Mucosa of descending colon (tissue), 3 donors: ENCODE measurements at regions of chr10 and their contacts with region 1.

Region 1: DNA sequence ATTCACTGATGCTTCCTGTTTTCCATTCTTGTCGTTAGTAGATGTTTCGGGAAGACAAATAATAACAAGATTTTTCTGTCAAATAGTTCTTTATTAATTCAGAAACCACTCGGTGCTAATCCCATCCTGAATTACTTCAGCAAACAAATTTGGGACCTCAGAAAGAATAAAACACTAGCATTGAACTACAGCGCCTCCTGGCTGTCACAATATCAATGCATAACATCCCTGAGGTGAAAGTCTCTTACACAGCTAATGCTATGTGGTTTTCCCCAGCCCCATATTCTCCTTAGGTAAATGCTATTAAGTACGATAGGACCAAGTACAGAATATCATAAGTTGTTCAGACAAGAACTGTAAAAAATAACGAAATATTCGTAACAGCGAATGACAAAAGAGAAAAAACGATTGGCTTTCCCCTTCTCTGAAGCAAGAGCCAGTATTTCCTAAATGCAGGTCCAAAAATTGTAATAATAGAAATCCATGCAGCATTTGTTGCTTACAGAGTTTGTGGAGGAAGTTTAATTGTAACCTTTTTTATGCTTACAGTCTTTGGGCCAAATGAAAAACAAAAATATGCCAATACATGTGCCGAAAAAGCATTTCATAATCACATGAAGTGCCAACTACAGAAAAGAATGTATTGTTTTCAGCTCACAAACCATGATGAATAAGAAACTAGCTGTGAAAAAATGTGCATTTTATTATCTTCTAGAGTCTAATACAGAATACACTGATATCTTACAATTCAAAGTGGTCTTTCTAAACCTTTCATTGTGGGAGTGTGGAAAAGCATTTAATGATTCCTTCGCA is 47.3 kb downstream of the MYPN start:
- DNase-seq: peak in 1 of 3 donors; percentile 90
- ATAC-seq: peak; percentile 58
- H3K4me3 ChIP-seq: no peak overlapping the region
- H3K4me1 ChIP-seq: peaks cover 5% of the 10 kb centered on the region
- CTCF ChIP-seq: peak; percentile 63

Region 2: DNA sequence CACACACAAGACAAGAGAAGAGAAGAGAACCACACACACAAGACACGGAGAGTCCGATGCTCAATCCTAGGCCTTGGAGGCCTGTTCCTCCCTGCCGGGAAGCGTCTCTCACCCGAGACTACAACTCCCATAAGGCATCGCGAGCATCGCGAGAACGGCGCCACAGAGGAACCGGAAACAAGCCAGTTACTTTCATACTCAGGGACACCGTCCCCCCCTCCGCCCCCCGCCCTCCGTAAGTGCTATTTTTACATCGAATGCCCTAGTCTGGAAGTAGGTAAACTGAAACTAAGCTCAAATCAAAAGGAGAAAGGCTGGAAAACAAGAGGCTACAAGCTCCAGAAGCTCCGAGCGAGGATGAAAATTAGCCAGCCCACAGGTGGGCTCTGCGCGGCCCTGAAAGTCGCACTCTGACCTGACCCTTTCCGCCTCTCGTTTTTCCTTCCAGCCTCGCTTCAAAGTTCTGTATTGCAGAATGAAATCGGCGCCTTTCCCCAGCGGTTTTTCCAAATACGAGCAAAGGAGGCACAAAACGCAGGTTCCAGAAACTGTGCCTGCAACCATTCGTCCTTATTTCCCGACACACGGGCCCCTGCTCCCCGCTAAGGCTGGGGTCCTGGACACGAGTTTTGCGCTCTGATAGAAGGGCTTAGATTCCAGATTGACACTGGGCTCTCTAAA is 307.1 kb before region 1 on chr10:
- intact Hi-C with region 1: loop called in 1 of 2 experiments (anchors 2 kb)
- DNase-seq: peak; percentile 96 to 99 (median 98)
- ATAC-seq: peak; percentile 97
- H3K4me3 ChIP-seq: peak overlapping the region; percentile 54
- H3K4me1 ChIP-seq: peaks cover 3% of the 10 kb centered on the region
- CTCF ChIP-seq: no peak

Region 3: DNA sequence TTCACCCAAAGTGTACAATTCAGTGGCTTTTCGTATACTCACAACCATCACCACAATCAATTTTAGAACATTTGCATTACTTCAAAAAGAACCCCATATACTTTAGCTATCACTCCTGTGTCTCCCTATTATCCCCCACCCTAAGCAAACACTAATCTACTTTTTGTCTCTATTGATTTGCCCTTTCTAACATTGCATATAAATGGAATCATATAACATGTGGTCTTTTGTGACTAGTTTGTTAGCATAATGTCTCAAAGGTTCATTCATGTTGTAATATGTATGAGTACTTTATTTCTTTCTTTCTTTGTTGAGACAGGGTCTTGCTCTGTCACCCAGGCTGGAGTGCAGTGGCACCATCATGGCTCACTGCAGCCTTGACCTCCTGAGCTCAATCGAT is 297.6 kb before region 1 on chr10:
- intact Hi-C with region 1: loop called (anchors 2 to 5 kb)
- DNase-seq: no peak
- ATAC-seq: no peak
- H3K4me3 ChIP-seq: no peak overlapping the region
- H3K4me1 ChIP-seq: no peaks in the 10 kb centered on the region
- CTCF ChIP-seq: no peak

Region 4: DNA sequence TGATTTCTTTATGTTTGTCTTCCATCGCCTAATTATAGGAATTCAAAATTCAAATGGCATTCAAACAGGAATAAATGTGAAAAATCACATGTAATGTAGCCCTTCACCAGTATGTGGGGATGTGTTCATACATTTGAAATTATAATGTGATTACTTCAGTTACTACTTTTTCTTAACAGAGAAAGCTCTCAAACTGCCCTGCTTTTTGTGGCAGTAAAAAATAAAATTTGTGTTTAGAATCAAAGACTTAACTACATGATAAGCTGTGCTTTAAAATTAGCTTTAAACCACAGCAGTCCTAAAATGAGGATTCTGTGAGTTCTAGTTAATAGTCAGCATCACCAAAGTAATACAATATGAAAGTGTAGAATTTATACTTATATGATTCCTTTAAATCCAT is 73.7 kb before region 1 on chr10:
- intact Hi-C with region 1: loop called in 1 of 2 experiments (anchors 10 kb)
- DNase-seq: no peak
- ATAC-seq: no peak
- H3K4me3 ChIP-seq: no peak overlapping the region
- H3K4me1 ChIP-seq: no peaks in the 10 kb centered on the region
- CTCF ChIP-seq: no peak